Aorta (tissue), 5 donors: ENCODE measurements at regions of chr6 and their contacts with region 1.

Region 1: DNA sequence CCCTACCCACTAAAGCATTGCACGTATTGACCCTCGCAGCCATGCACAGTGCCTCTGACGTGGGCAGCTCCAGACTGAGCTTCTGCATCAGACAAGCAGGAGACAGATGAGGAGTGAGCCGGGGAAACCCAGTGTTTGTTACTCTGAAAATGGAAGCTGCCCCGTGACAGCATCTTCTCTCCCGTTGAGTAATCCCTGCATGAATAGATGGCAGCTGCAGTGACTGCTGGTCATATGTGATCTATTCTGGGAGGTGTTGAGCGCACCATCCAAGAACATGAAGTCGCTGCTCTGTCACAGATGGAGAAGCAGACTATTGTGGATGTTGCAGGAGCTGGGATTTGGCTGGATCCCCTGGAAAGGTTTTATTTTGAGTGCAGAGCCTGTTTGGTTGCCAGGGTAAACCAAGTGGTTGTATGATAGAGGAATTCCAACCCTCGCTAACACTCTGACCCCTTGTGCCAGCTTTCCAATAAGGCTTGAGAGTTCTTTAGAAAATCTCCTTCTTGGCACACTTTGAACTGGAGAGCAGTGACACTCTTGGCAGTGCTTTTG is 242.2 kb downstream of the NRN1 start:
- DNase-seq: peak in 1 of 2 donors; percentile 60
- ATAC-seq: peak; percentile 86
- H3K4me3 ChIP-seq: no peak overlapping the region
- H3K27ac ChIP-seq: peak overlapping the region; percentile 50 to 65
- H3K4me1 ChIP-seq: peaks cover 5 to 13% of the 10 kb centered on the region in 2 donors
- H3K27me3 ChIP-seq: no peaks in the 10 kb centered on the region

Region 2: DNA sequence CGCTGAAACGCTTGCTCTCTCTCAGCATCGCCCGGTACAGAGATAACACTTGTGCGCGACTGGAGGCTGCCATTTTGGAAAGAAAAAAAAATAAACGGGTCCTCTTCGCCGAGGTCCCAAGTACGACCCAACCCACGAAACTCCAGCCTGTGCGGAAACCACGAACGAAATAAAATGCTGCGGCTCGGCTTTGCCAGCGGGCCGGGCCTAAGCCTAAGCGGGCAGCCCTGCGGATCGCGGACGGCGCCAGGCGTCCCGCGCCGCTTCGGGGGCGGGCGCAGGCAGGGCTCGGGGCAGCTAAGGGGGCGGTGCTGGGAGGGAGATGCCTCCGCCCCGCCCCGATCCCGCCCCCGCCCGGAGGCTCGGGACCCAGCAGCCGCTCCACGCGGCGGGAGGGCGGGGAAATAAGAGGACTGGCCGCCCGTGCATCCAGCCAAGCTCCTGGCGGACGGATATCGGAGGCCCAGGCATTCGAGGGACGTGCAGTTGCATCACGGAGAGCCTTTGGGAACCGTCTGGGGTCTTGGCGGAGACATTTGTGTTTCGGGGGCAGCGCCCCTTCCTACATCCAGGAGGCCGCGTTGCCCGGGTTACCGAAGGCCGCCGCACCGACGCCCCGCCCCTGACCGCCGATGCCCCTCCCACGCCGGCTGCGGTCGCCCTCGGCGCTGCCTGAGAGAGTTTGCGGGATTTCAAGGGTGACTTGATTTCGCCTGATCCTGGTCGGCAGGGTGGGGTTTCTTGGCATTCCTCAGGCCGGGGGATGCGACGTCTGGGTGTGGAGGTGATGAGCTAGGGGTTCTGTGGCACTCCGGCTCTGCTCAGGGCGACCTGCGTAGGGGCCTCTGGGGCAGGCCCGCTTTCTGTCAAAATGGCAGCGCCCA is 503.6 kb before region 1 on chr6 and contains the starts of genes FARS2 and LYRM4:
- intact Hi-C with region 1: loop called in 1 of 2 experiments (anchors 10 kb)
- DNase-seq: peak; percentile 94 to 96
- ATAC-seq: peak; percentile 99
- H3K4me3 ChIP-seq: peak within 1 kb of the TSS; percentile 75 to 90
- H3K27ac ChIP-seq: peak within 1 kb of the TSS; percentile 71 to 72
- H3K4me1 ChIP-seq: peaks cover 0 to 7% of the 10 kb centered on the region in 2 donors
- H3K27me3 ChIP-seq: no peaks in the 10 kb centered on the region
- total RNA-seq, gene FARS2: 11.1 to 14.2 TPM
- total RNA-seq, gene LYRM4: 17.9 to 23.9 TPM

Region 3: DNA sequence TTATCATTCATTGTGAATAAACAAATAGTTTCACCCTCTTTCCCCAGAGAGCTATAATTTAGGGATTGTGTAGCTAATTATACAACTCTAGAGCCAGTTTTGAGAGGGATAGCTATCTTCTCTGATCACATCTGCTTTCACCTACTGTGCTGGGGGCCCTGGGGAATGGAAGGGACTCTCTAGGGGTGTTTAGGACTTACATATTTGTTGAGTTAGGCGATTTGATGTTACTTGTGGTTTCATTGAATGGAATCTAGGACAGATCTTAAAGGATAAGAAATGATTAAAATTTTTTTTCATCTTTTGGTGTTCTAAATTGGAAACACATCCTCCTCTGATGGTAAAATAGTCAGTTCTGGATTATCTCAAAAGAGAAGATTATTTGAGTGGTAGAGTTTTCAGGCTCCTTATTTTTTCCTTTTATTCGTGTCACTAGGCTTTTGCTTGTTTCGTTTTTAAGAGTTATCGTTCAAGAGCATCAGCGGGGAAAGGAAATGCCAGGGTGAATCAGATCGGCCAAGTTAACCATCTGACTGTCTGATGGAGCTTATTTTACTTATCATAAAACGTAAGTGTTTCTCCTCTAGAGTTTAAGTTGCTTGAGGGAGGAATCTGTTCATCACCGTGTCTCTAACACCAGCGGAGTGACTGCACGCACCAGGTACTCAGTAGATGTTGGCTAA is 266.4 kb before region 1 on chr6:
- intact Hi-C with region 1: loop called in 1 of 2 experiments (anchors 10 kb)
- DNase-seq: no peak
- ATAC-seq: no peak
- H3K4me3 ChIP-seq: no peak overlapping the region
- H3K27ac ChIP-seq: no peak overlapping the region
- H3K4me1 ChIP-seq: peaks cover 0 to 3% of the 10 kb centered on the region in 2 donors
- H3K27me3 ChIP-seq: no peaks in the 10 kb centered on the region

Region 4: GRCh38 chr6:5670811-5671561 is 93.5 kb before region 1 on chr6:
- intact Hi-C with region 1: loop called (anchors 5 kb)
- DNase-seq: peak in 1 of 2 donors; percentile 49
- ATAC-seq: peak; percentile 43
- H3K4me3 ChIP-seq: no peak overlapping the region
- H3K27ac ChIP-seq: no peak overlapping the region
- H3K4me1 ChIP-seq: no peaks in the 10 kb centered on the region
- H3K27me3 ChIP-seq: no peaks in the 10 kb centered on the region

Region 5: DNA sequence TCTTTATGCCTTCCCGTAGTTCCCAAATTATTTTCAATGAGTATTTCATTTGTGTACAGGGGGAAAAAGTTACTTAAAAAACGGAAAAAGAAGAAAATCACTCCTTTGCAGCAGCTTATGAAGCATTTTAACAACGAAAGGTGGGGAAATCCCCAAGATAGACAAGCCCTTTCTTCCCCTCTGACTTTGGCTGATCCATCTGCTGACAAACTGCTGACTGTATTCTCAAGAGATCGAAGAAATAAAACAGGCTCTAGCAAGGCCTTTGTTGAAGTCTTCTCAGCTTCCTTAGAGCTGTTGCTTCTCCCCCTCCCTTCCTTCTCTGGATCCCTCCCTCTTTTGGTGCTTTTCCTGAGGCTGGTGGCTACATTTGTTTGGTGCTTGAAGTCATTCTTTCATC is 83.0 kb before region 1 on chr6:
- intact Hi-C with region 1: no loop called
- DNase-seq: no peak
- ATAC-seq: no peak
- H3K4me3 ChIP-seq: no peak overlapping the region
- H3K27ac ChIP-seq: no peak overlapping the region
- H3K4me1 ChIP-seq: no peaks in the 10 kb centered on the region
- H3K27me3 ChIP-seq: no peaks in the 10 kb centered on the region

Region 6: DNA sequence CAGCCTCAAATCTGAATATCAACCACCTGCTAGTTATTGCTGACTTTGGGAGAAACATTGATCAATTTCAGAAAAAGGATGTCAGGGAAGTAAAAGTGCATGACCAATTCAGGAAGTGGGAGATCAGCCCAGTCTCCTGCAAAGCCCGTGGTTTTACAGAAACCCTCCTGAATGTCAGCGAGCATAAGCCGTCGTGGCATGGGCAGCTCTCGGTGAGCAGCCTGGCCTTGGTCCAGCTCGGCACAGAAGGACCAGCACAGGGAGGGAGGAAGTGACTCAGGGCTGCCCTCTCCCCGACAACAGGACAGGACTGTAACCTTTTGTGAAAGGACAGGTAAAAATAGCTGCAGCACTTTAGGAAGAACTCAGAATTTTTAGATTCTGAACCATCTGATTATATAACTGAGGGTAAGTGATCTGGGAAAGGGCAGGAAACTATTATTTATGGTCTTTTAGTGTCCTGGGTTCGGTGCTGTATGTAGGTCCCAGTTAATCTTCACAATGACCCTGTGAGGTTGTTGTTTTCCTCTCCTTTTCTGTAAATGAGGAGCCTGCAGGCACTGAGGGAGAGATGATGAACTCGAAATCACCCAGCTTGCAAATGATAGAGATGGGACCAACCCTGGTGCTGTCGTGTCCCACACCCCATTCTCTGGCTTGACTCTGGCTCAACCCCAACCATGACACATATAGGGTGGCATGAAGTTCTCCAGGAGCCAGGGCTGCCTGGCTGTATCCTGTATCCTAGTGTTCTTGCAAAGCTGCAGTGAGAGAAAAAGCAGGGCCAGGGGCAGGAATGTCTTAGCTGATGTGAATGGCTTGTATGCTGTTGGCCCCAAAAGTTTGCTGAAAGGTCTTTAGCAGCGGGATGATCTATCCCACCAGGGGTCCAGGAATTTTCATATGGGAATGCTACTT is 204.6 kb after region 1 on chr6:
- intact Hi-C with region 1: loop called in 1 of 2 experiments (anchors 10 kb)
- DNase-seq: peak; percentile 87 to 93
- ATAC-seq: peak; percentile 67
- H3K4me3 ChIP-seq: no peak overlapping the region
- H3K27ac ChIP-seq: no peak overlapping the region
- H3K4me1 ChIP-seq: peaks cover 0 to 5% of the 10 kb centered on the region in 2 donors
- H3K27me3 ChIP-seq: no peaks in the 10 kb centered on the region

Region 7: DNA sequence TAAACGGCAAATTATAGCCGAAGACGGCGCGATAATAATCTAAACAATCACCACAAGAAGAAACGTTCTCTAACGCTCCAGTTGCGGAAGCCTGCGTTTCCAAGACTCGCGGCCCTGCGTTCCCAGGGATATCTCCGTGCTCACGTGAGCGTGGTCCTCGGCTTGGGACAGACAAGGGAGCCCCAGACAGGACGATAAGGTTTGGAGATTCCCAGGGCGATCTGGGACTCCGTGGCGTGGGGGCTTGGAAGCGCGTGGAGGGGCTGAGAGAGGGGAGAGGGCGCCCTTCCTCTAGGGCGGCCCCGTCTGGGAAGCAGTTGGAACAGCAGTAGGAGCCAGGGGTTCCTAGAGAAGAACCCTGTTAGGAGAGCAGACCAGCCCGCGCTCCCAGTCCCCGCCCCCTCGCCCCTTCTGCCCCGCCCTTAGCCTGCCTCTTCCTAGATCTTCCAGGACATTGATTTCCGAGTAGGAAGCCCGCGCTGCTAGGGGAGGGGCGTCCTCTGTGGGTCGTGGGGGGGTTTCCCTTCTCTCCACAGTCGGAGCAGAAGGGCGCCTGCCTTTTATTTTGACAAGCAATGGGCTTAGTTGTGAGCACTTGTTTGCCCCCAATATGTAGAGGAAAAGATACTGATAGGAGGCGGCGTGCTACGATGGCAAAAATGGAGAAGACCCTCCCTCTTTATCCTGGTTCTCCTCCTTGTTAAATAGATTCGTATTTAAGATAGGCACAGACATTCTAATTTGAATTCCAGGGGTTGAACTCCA is 231.7 kb after region 1 on chr6:
- intact Hi-C with region 1: loop called (anchors 10 kb)
- DNase-seq: peak; percentile 72 to 92
- ATAC-seq: peak; percentile 77
- H3K4me3 ChIP-seq: peak overlapping the region; percentile 5 to 46
- H3K27ac ChIP-seq: no peak overlapping the region
- H3K4me1 ChIP-seq: no peaks in the 10 kb centered on the region
- H3K27me3 ChIP-seq: peaks cover 0 to 2% of the 10 kb centered on the region in 2 donors

Region 8: GRCh38 chr6:6008648-6009421 is 244.4 kb after region 1 on chr6:
- intact Hi-C with region 1: loop called in 1 of 2 experiments (anchors 10 kb)
- DNase-seq: peak; percentile 74 to 93
- ATAC-seq: peak; percentile 92
- H3K4me3 ChIP-seq: peak overlapping the region; percentile 24 to 30
- H3K27ac ChIP-seq: no peak overlapping the region
- H3K4me1 ChIP-seq: no peaks in the 10 kb centered on the region
- H3K27me3 ChIP-seq: no peaks in the 10 kb centered on the region